Caco-2 (cell line): ENCODE measurements at regions of chr7 and their contacts with region 1.

Region 1: DNA sequence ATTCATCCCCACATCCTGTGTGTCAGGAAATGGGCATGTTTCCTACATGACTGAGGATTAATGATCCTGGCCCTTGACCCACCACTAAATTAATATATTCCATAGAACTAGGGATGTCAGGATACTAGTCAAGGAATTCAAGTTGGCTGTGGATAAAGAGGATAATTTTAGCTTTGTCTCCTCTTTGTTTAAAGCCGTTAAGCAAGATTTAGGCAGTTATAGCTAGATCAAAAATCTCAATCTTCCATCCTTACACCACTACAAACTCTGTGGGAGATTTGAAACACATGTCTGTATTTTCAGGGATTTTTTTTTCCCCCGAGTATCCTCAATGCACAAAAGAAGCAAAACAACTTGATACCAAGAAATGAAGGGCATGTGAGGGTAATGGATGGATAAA is 417.1 kb downstream of the MAGI2 start:
- DNase-seq: no peak
- H3K4me3 ChIP-seq: no peak overlapping the region
- H3K4me3 Mint-ChIP-seq: no peak overlapping the region
- H3K27ac Mint-ChIP-seq: no peak overlapping the region
- H3K4me1 ChIP-seq: no peaks in the 10 kb centered on the region
- H3K4me1 Mint-ChIP-seq: no peaks in the 10 kb centered on the region
- H3K27me3 ChIP-seq: no peaks in the 10 kb centered on the region
- H3K27me3 Mint-ChIP-seq: peaks cover 11% of the 10 kb centered on the region
- CTCF ChIP-seq: no peak

Region 2: GRCh38 chr7:78301407-78301806 is 734.9 kb before region 1 on chr7:
- CTCF ChIA-PET with region 1: no interaction called
- POLR2A ChIA-PET with region 1: no interaction called
- intact Hi-C with region 1: no loop called
- DNase-seq: no peak
- H3K4me3 ChIP-seq: no peak overlapping the region
- H3K4me3 Mint-ChIP-seq: no peak overlapping the region
- H3K27ac Mint-ChIP-seq: no peak overlapping the region
- H3K4me1 ChIP-seq: no peaks in the 10 kb centered on the region
- H3K4me1 Mint-ChIP-seq: no peaks in the 10 kb centered on the region
- H3K27me3 ChIP-seq: no peaks in the 10 kb centered on the region
- H3K27me3 Mint-ChIP-seq: no peaks in the 10 kb centered on the region
- CTCF ChIP-seq: no peak

Region 3: DNA sequence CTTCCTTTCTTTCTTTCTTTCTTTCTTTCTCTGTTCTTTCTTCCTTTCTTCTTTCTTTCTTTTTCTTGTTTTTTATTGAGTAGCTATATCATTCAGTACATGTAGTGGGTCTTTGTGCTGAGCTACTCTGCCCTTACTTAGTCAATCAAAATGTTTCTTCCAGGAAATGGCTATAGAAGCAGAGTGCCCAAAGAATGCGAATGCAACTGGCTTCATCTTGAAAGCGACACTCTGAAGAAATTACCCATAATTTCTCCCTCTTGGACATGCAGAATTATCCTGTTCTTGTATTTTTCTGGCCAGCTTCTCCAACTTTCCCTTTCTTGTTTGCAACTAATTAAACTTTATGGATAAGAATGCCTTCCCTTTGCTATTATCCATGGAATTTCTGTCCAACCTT is 24.4 kb before region 1 on chr7:
- CTCF ChIA-PET with region 1: no interaction called
- POLR2A ChIA-PET with region 1: no interaction called
- intact Hi-C with region 1: no loop called
- DNase-seq: no peak
- H3K4me3 ChIP-seq: no peak overlapping the region
- H3K4me3 Mint-ChIP-seq: no peak overlapping the region
- H3K27ac Mint-ChIP-seq: no peak overlapping the region
- H3K4me1 ChIP-seq: no peaks in the 10 kb centered on the region
- H3K4me1 Mint-ChIP-seq: no peaks in the 10 kb centered on the region
- H3K27me3 ChIP-seq: no peaks in the 10 kb centered on the region
- H3K27me3 Mint-ChIP-seq: peaks cover 3% of the 10 kb centered on the region
- CTCF ChIP-seq: no peak

Region 4: DNA sequence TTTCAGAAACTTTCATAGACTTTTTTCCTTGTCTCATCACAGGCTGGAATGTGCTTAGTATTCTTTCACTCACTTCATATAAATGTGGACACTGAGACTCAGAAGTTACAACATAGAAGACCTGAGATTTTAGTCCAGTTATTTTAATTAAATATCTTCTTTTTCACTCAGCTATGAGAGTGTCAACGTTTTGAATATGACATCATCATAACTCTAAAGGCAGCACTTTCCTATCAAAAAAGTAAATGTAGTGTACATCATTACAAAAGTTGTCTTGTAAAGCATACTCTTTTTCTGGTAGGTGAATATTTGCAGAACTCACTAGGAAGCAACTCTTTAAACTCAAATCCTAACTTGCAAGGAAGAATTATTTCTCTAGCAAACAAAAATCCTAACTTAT is 806.3 kb after region 1 on chr7:
- CTCF ChIA-PET with region 1: no interaction called
- POLR2A ChIA-PET with region 1: no interaction called
- intact Hi-C with region 1: loop called (anchors 5 kb)
- DNase-seq: no peak
- H3K4me3 ChIP-seq: no peak overlapping the region
- H3K4me3 Mint-ChIP-seq: no peak overlapping the region
- H3K27ac Mint-ChIP-seq: no peak overlapping the region
- H3K4me1 ChIP-seq: no peaks in the 10 kb centered on the region
- H3K4me1 Mint-ChIP-seq: no peaks in the 10 kb centered on the region
- H3K27me3 ChIP-seq: no peaks in the 10 kb centered on the region
- H3K27me3 Mint-ChIP-seq: no peaks in the 10 kb centered on the region
- CTCF ChIP-seq: no peak